ENCODE measurements at regions of chr21 and their contacts with region 1.

Region 1: DNA sequence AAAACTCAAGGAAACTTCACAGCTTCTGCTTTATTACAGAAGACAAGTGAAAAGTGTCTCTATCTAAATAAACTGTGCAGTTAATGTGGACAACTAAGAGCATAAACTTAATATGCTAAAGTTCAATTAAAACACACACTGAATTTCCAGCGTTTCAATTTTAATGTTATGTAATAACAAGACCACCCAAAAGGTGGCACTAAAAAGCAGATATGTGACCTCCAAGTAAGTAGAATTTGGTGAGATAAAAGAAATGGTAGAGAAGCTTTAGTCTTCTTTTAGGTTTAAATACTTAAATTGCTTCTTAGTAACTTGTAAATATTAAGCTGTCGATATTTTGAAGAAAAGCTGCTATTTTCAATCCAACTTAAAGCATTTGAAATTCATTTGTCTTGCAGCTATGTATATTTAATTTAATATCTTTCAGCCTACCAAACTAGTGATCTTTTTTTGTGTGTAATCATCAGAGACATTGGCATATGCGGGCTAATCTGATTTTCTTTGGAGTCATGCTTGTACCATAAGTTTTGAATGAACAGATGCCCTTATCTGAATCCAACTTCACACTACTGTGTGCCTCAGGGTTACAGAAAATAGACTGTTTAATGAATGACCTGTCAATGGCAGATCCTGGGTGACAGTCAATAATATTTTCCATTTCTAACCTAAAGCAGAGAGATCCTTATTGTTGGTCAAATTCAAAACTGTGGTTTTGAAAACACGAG is 36.5 kb upstream of the ADAMTS1 start:
- DNase-seq: no peak
- H3K4me3 ChIP-seq: no peak overlapping the region
- H3K27ac ChIP-seq: no peak overlapping the region
- H3K4me1 ChIP-seq: no peaks in the 10 kb centered on the region
- H3K27me3 ChIP-seq: no peaks in the 10 kb centered on the region
- CTCF ChIP-seq: peak in 1 of 3 experiments; percentile 23; a peak in 2 of 4 replicates
- EP300 ChIP-seq: no peak
- POLR2A ChIP-seq: no peak
- RAD21 ChIP-seq: peak in 1 of 2 experiments; percentile 69

Region 2: GRCh38 chr21:26892151-26892550 is 10.5 kb after region 1 on chr21:
- CTCF ChIA-PET with region 1: interaction called, 16 read pairs
- POLR2A ChIA-PET with region 1: no interaction called
- DNase-seq: no peak
- H3K4me3 ChIP-seq: no peak overlapping the region
- H3K27ac ChIP-seq: no peak overlapping the region
- H3K4me1 ChIP-seq: no peaks in the 10 kb centered on the region
- H3K27me3 ChIP-seq: peaks cover 0 to 1% (median 0%) of the 10 kb centered on the region in 4 experiments; a peak in 1 of 7 replicates
- CTCF ChIP-seq: no peak
- EP300 ChIP-seq: no peak
- POLR2A ChIP-seq: no peak
- RAD21 ChIP-seq: no peak

Region 3: DNA sequence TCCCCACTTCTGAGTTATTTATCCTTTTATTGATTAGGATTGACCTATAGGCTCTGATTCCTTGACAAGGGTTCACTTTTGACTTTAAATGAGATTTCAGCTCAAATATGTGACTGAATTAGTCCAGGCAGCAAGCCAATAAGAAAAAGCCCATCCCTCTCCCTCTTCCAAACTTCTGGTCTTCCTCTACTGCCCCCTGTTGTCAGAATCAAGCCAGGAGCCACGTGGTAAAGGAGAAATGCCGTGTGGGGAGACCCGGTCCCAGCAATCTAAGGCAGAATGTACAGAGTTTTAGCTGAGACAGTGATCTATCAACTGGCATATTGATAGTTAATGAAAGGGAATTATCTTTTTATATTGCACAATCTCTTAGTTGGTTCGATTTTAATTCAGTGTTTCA is 80.0 kb after region 1 on chr21:
- CTCF ChIA-PET with region 1: interaction called, 74 read pairs
- POLR2A ChIA-PET with region 1: interaction called, 3 read pairs
- DNase-seq: peak in 1 of 2 experiments; percentile 66
- H3K4me3 ChIP-seq: no peak overlapping the region
- H3K27ac ChIP-seq: no peak overlapping the region
- H3K4me1 ChIP-seq: peaks cover 3 to 9% (median 6%) of the 10 kb centered on the region in 4 experiments; a peak in 6 of 7 replicates
- H3K27me3 ChIP-seq: peaks cover 0 to 21% (median 17%) of the 10 kb centered on the region in 4 experiments; a peak in 6 of 7 replicates
- CTCF ChIP-seq: peak; percentile 60 to 75 (median 70)
- EP300 ChIP-seq: no peak
- POLR2A ChIP-seq: no peak
- RAD21 ChIP-seq: peak; percentile 62 to 74

Region 4: GRCh38 chr21:26967062-26967913 is 85.6 kb after region 1 on chr21 and contains the start of gene ADAMTS5:
- CTCF ChIA-PET with region 1: interaction called, 74 read pairs
- POLR2A ChIA-PET with region 1: interaction called, 3 read pairs
- DNase-seq: peak in 1 of 2 experiments; percentile 69
- H3K4me3 ChIP-seq: peak within 1 kb of the TSS; percentile 41 to 75 (median 72)
- H3K27ac ChIP-seq: no peak within 1 kb of the TSS
- H3K4me1 ChIP-seq: peaks cover 4 to 9% (median 9%) of the 10 kb centered on the region in 4 experiments; a peak in 6 of 7 replicates
- H3K27me3 ChIP-seq: peaks cover 0 to 43% (median 32%) of the 10 kb centered on the region in 4 experiments; a peak in 6 of 7 replicates
- CTCF ChIP-seq: no peak
- EP300 ChIP-seq: no peak
- POLR2A ChIP-seq: no peak
- RAD21 ChIP-seq: no peak; a peak in 1 of 4 replicates
- total RNA-seq, gene ADAMTS5: 0.82 and 1.1 TPM in 2 replicates